Lower leg skin (tissue), 4 donors: ENCODE measurements at regions of chr12 and their contacts with region 1.

Region 1: GRCh38 chr12:132053338-132054330 is 90.5 kb downstream of the DDX51 start:
- DNase-seq: no peak
- H3K4me3 ChIP-seq: no peak overlapping the region
- CTCF ChIP-seq: no peak
- POLR2A ChIP-seq: no peak

Region 2: DNA sequence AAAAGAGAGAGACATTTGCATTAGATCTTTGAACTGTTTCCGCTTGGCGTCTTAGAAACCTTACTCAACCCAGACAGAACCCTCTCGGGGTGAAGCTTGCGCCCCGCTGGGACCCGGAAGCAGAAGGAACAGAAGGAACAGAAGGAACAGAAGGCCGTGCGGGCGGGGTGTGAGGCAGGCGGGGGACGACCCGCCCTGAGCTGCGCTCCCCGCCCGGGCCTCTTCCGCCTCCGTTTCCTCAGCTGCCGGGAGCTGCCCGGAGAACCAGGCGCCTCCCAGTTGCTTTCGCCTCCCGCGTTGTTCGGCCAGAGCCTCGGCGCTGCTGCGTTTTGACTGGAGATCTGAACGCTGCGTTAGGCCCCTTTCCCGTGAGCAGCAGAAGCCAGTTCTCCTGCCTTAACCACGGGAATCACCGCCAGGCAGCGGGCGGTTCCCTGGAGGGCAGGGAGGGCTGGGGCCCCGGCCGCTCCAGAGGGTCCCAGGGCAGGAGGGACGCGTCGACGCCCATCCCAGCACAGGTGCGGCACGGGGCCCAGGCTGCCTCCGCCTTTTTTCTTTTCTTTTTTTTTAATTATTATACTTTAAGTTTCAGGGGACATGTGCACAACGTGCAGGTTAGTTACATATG is 244.8 kb before region 1 on chr12:
- intact Hi-C with region 1: no loop called
- DNase-seq: no peak
- H3K4me3 ChIP-seq: no peak overlapping the region
- CTCF ChIP-seq: no peak
- POLR2A ChIP-seq: no peak

Region 3: GRCh38 chr12:132094381-132094803 is 40.8 kb after region 1 on chr12:
- intact Hi-C with region 1: loop called (anchors 1 kb)
- DNase-seq: peak in 1 of 2 donors; percentile 29
- H3K4me3 ChIP-seq: no peak overlapping the region
- CTCF ChIP-seq: no peak
- POLR2A ChIP-seq: no peak